ENCODE measurements at regions of chr2 and their contacts with region 1.

Region 1: GRCh38 chr2:238263204-238264071 is 23.6 kb upstream of the HES6 start:
- DNase-seq: peak; percentile 93
- H3K4me3 ChIP-seq: no peak overlapping the region
- H3K27ac ChIP-seq: no peak overlapping the region
- H3K4me1 ChIP-seq: peaks cover 15% of the 10 kb centered on the region
- H3K27me3 ChIP-seq: no peaks in the 10 kb centered on the region
- CTCF ChIP-seq: peak; percentile 87 to 90
- POLR2A ChIP-seq: no peak

Region 2: GRCh38 chr2:237923481-237924163 is 339.8 kb before region 1 on chr2:
- CTCF ChIA-PET with region 1: interaction called, 8 read pairs
- POLR2A ChIA-PET with region 1: no interaction called
- dilution Hi-C with region 1: no loop called
- intact Hi-C with region 1: loop called (anchors 10 kb)
- DNase-seq: peak; percentile 51
- H3K4me3 ChIP-seq: no peak overlapping the region
- H3K27ac ChIP-seq: no peak overlapping the region
- H3K4me1 ChIP-seq: no peaks in the 10 kb centered on the region
- H3K27me3 ChIP-seq: no peaks in the 10 kb centered on the region
- CTCF ChIP-seq: peak; percentile 95 to 96
- POLR2A ChIP-seq: no peak

Region 3: DNA sequence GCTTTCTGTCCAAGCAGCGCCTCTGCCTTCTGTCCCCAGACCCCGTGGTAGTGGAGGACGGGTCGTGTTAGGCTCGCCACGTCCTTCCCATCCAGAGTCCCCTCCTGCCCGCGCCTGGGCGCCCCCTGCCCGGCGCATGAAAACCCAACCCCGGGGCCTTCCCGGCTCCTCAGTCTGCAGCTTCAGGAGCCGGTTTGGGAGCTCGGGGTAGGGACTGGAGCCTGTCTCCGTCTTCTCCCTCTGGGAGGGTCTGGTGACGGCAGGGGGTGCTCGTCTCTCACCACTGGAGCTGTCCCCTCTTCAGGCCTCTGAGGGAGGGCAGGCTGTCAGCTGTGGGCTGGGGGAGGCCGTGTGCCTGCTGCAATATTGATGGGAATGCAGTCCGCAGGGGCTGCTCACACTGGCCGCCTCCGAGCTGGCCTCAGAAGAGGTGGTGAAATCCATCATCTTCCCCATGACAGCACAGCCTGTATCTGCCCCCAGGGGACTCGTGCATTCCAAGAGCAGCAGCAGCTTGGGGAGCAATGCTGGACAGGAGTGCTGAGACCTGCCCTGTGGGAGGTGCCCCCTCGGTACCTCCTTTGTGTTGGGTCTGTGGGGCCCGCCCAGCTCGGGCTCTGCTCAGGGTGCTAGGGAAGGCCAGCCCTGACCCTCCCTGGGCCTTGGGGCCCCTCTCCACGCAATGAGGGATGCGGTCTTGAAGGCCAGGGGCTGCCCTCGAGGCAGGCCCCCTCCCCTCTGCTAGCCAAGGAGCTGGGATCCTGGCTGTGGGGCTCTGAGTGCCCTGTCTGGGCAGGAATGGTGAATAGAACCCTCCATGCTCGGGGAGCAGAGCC is 142.8 kb before region 1 on chr2:
- CTCF ChIA-PET with region 1: interaction called, 22 read pairs
- POLR2A ChIA-PET with region 1: no interaction called
- dilution Hi-C with region 1: no loop called
- intact Hi-C with region 1: no loop called
- DNase-seq: no peak
- H3K4me3 ChIP-seq: no peak overlapping the region
- H3K27ac ChIP-seq: no peak overlapping the region
- H3K4me1 ChIP-seq: no peaks in the 10 kb centered on the region
- H3K27me3 ChIP-seq: peaks cover 1 to 2% of the 10 kb centered on the region in 2 experiments
- CTCF ChIP-seq: peak in 1 of 2 donors; percentile 31
- POLR2A ChIP-seq: no peak

Region 4: GRCh38 chr2:238203094-238203972 is 60.1 kb before region 1 on chr2 and contains the start of gene ILKAP:
- CTCF ChIA-PET with region 1: interaction called, 21 read pairs
- POLR2A ChIA-PET with region 1: no interaction called
- dilution Hi-C with region 1: no loop called
- intact Hi-C with region 1: loop called (anchors 2 kb)
- DNase-seq: peak; percentile 74
- H3K4me3 ChIP-seq: peak within 1 kb of the TSS; percentile 83 to 91 (median 87)
- H3K27ac ChIP-seq: peak within 1 kb of the TSS; percentile 79
- H3K4me1 ChIP-seq: peaks cover 12% of the 10 kb centered on the region
- H3K27me3 ChIP-seq: peaks cover 11 to 12% of the 10 kb centered on the region in 2 experiments
- CTCF ChIP-seq: no peak
- POLR2A ChIP-seq: peak; percentile 90
- total RNA-seq, gene ILKAP: 47.5 and 49.2 TPM in 2 replicates

Region 5: GRCh38 chr2:238247002-238247822 is 16.2 kb before region 1 on chr2:
- CTCF ChIA-PET with region 1: interaction called, 43 read pairs
- POLR2A ChIA-PET with region 1: no interaction called
- dilution Hi-C with region 1: no loop called
- intact Hi-C with region 1: no loop called
- DNase-seq: no peak
- H3K4me3 ChIP-seq: no peak overlapping the region
- H3K27ac ChIP-seq: no peak overlapping the region
- H3K4me1 ChIP-seq: no peaks in the 10 kb centered on the region
- H3K27me3 ChIP-seq: no peaks in the 10 kb centered on the region
- CTCF ChIP-seq: no peak
- POLR2A ChIP-seq: no peak

Region 6: GRCh38 chr2:238288650-238289573 is 25.5 kb after region 1 on chr2:
- CTCF ChIA-PET with region 1: interaction called, 39 read pairs
- POLR2A ChIA-PET with region 1: interaction called, 3 read pairs
- dilution Hi-C with region 1: no loop called
- intact Hi-C with region 1: loop called (anchors 1 kb)
- DNase-seq: peak; percentile 99
- H3K4me3 ChIP-seq: peak overlapping the region; percentile 22 to 79 (median 48)
- H3K27ac ChIP-seq: peak overlapping the region; percentile 56
- H3K4me1 ChIP-seq: peaks cover 14% of the 10 kb centered on the region
- H3K27me3 ChIP-seq: no peaks in the 10 kb centered on the region
- CTCF ChIP-seq: peak; percentile 33 to 52
- POLR2A ChIP-seq: no peak

Region 7: DNA sequence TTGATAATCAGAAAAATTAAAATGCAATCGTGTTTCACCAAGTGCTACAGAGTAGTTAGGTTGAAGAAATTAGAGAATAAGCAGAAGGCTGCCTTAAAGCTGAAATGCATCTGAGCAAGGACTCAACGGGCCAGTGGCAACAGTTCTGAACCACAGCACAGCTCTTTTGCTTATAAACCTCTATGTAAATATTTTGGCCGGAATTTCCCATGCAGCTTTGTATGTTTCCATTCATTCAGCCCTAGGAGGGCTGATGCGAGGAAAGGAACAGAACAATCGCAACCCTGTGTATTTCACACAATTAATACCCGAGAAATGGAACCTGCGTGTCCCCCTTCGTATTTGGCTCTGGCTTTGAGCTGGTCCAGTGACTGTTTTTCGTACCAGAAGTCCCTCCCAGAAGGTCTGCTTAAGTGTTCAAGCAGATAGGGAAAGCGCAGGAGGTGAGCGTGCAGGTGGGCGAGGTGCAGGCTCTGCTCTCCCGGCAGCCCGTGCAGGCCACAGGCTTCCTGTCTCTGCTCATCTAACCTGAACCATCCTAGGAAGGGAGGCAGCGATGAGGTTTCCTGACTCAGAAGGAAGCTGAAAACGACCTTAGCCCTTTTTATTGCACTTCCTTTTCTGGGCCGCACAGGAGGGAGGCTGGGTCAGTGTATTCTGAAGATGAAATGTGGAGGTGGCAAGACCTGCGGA is 230.6 kb after region 1 on chr2:
- CTCF ChIA-PET with region 1: no interaction called
- POLR2A ChIA-PET with region 1: no interaction called
- dilution Hi-C with region 1: no loop called
- intact Hi-C with region 1: no loop called
- DNase-seq: no peak
- H3K4me3 ChIP-seq: no peak overlapping the region
- H3K27ac ChIP-seq: no peak overlapping the region
- H3K4me1 ChIP-seq: no peaks in the 10 kb centered on the region
- H3K27me3 ChIP-seq: no peaks in the 10 kb centered on the region
- CTCF ChIP-seq: no peak
- POLR2A ChIP-seq: no peak